ENCODE measurements at regions of chr15 and their contacts with region 1.

Region 1: DNA sequence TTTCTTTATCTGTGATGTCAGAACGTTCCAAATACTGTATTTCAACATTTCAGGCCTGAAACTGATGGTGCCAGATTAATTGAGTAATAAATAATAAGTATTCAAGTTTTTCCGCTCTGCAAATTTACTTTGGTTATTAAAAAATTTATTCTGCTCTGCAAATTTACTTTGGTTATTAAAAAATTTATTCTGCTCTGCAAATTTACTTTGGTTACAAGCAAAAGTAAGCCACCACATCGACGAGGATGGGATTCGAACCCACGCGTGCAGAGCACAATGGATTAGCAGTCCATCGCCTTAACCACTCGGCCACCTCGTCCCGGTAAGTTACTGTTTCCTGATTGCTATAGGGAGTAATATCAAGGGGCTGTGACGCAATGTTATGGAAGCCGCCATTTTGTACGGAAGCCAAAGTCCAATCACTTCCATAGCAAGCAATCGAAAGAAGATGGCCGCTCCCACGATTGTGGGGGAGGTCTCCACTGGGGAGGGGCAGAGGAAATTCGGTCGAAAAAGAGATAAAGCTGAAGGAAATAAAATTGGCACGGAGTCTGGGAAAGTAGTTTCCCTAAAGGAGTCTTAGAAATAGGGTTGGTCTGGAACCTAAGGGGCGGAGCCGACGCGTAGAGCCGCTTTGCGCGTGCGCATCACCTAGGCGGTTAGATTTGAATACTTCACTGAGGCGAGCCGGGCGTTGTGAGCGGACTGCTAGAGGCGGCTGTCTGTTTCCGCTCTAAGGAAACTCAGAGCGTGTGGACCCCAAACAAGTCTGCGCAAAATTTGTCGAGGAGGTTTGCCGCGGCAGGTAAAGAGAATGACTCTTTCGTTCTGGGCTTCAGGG is at the start of gene KNL1:
- DNase-seq: peak; percentile 91
- ATAC-seq: peak; percentile 97
- total RNA-seq, gene KNL1: 0.51 TPM

Region 2: GRCh38 chr15:40511472-40512133 is 82.2 kb before region 1 on chr15:
- intact Hi-C with region 1: loop called (anchors 10 kb)
- DNase-seq: peak; percentile 92
- ATAC-seq: peak; percentile 95

Region 3: DNA sequence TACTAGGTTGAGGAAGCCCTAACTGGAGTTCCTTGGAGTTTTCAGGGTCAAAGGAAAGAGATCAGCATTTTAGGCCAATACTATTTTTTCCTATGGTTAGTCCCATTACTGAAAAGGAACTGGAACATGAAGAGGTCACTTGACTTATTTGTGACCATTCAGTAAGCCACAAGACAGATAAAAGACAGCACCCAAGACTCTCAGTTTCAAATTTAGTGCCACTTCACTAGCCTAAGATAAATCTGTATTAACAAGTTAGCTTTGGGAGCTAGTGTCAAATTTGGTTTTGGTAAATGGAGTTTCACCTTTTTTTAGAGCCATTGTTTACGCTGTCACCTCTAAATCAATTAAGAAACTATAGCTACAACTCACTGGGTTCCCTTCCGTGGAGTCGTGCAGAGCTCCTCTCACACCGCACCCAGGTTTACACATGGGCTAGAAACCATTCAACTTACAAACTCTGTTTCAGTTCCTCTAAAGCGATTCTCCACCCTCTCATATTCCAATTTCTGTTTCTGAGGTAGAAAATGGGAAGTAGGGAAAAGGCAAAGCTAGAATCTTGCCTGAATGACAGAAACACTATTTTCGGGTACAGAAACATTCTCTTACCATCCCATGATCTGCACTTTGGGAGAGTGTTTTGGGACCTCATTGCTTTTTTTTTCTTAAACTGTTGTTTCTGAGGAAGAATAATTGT is 43.3 kb before region 1 on chr15:
- intact Hi-C with region 1: no loop called
- DNase-seq: no peak
- ATAC-seq: peak; percentile 35